ENCODE measurements at regions of chr3 and their contacts with region 1.

Region 1: DNA sequence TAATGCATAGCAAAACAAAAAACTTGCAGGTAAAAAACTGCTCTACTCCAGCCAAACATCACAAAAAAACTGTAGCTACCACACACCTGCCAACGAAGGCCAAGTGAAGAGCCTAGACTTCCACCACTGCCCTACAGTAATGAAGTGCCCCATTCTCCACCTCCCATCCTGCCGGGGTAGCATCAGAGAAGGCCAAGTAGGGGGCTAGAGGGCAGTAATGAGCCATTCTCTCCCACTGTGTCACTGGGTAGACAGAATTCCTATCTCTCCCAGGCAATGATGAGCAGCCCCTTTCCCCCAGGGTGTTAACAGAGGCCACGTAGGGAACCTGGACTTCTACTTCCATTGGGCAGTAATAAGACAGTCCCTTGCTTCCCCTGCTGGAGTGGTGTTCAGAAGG is 9.5 kb downstream of the SEC22C start:
- DNase-seq: peak in 4 of 9 experiments; percentile 18 to 58 (median 34)
- ATAC-seq: peak; percentile 66
- H3K4me3 ChIP-seq: no peak overlapping the region
- H3K4me3 Mint-ChIP-seq: no peak overlapping the region
- H3K27ac ChIP-seq: no peak overlapping the region
- H3K27ac Mint-ChIP-seq: no peak overlapping the region
- H3K4me1 ChIP-seq: peaks cover 1% of the 10 kb centered on the region
- H3K4me1 Mint-ChIP-seq: peaks cover 16% of the 10 kb centered on the region
- H3K27me3 ChIP-seq: no peaks in the 10 kb centered on the region
- H3K27me3 Mint-ChIP-seq: no peaks in the 10 kb centered on the region
- CTCF ChIP-seq: no peak

Region 2: DNA sequence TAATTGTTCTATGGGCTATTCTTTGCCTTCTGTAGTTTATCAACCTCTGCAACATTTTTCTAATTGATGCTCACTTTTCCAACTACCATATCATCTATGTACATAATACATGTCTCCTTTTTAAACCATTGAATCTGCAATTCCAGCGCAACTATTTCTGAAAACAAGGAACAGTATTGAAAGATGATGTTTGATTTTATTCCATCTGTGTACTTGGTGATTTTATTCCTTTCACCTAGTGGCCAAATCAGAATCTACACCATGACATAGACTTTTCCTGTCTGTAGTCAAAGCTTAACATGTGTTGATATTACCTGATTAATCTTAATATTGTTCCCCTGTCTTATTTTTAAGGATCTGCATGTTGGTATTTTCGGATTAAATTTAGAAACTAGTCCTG is 41.2 kb after region 1 on chr3:
- CTCF ChIA-PET with region 1: interaction called, 5 read pairs
- POLR2A ChIA-PET with region 1: no interaction called
- intact Hi-C with region 1: loop called (anchors 5 kb)
- DNase-seq: peak in 2 of 9 experiments; percentile 38 to 50
- ATAC-seq: peak; percentile 66
- H3K4me3 ChIP-seq: no peak overlapping the region
- H3K4me3 Mint-ChIP-seq: no peak overlapping the region
- H3K27ac ChIP-seq: no peak overlapping the region
- H3K27ac Mint-ChIP-seq: peak overlapping the region; percentile 10
- H3K4me1 ChIP-seq: peaks cover 23% of the 10 kb centered on the region
- H3K4me1 Mint-ChIP-seq: peaks cover 66% of the 10 kb centered on the region
- H3K27me3 ChIP-seq: no peaks in the 10 kb centered on the region
- H3K27me3 Mint-ChIP-seq: no peaks in the 10 kb centered on the region
- CTCF ChIP-seq: peak; percentile 62

Region 3: GRCh38 chr3:42721690-42722089 is 149.4 kb after region 1 on chr3:
- CTCF ChIA-PET with region 1: no interaction called
- POLR2A ChIA-PET with region 1: no interaction called
- intact Hi-C with region 1: no loop called
- DNase-seq: no peak
- ATAC-seq: no peak
- H3K4me3 ChIP-seq: no peak overlapping the region
- H3K4me3 Mint-ChIP-seq: no peak overlapping the region
- H3K27ac ChIP-seq: no peak overlapping the region
- H3K27ac Mint-ChIP-seq: no peak overlapping the region
- H3K4me1 ChIP-seq: no peaks in the 10 kb centered on the region
- H3K4me1 Mint-ChIP-seq: no peaks in the 10 kb centered on the region
- H3K27me3 ChIP-seq: no peaks in the 10 kb centered on the region
- H3K27me3 Mint-ChIP-seq: peaks cover 12% of the 10 kb centered on the region
- CTCF ChIP-seq: no peak

Region 4: GRCh38 chr3:42749753-42750231 is 177.5 kb after region 1 on chr3:
- CTCF ChIA-PET with region 1: no interaction called
- POLR2A ChIA-PET with region 1: no interaction called
- intact Hi-C with region 1: loop called in 1 of 2 experiments (anchors 1 kb)
- DNase-seq: no peak
- ATAC-seq: no peak
- H3K4me3 ChIP-seq: no peak overlapping the region
- H3K4me3 Mint-ChIP-seq: no peak overlapping the region
- H3K27ac ChIP-seq: no peak overlapping the region
- H3K27ac Mint-ChIP-seq: no peak overlapping the region
- H3K4me1 ChIP-seq: peaks cover 12% of the 10 kb centered on the region
- H3K4me1 Mint-ChIP-seq: peaks cover 15% of the 10 kb centered on the region
- H3K27me3 ChIP-seq: no peaks in the 10 kb centered on the region
- H3K27me3 Mint-ChIP-seq: no peaks in the 10 kb centered on the region
- CTCF ChIP-seq: no peak